ENCODE measurements at regions of chr17 and their contacts with region 1.

Region 1: DNA sequence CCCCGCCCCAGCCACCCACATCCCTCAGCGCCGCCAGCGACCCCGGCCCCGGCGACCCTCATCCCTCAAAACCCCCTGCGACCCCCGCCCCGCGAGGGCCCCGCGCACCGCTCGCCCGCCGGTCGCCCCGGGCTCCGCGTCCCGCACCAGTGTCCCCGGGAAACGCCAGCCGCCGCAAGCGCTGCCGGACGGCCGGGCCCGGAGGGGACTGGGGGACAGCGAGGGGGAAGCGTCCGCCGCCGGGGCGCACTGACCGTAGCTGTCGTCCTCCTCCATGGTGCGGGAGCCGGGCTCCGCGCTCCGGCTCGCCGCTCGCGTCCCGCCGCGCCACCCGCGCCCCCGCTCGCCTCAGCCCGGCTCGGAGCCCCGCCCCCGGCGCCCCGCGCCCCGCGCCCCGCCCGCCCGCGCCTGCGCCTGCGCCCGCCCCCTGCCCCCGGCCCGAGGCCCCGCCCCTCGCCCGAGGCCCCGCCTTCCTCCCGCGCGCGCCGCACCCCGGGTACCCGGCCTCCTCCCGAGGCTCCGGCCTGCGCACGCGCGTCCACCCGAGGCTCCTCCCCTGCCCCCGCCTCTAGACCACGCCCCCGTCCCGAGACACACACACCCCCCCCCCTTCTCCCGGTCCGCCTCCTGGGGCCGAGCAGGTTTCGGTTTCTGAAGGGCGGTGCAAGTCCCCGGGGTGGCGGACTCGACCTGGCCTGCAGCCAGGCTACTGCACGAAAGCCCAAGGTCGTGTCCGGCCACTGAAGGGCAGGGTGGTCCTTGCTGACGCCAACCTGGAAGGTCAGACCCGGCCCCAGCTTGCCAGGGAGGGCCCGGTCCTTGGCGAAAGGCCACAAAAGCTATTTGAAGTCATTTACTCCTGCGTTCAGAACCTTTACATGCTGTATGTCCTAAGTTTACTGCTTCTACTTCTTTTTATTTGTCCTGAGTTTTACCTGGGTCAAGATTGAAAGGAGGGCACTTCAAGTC is at the start of gene CYTH1:
- DNase-seq: peak; percentile 98
- H3K4me3 Mint-ChIP-seq: peak within 1 kb of the TSS; percentile 85
- H3K27ac Mint-ChIP-seq: peak within 1 kb of the TSS; percentile 98
- H3K4me1 Mint-ChIP-seq: peaks cover 56% of the 10 kb centered on the region
- H3K27me3 Mint-ChIP-seq: no peaks in the 10 kb centered on the region
- total RNA-seq, gene CYTH1: 288 to 309 TPM

Region 2: GRCh38 chr17:78769196-78769773 is 12.9 kb before region 1 on chr17:
- CTCF ChIA-PET with region 1: interaction called, 10 read pairs
- POLR2A ChIA-PET with region 1: interaction called, 861 read pairs
- DNase-seq: no peak
- H3K4me3 Mint-ChIP-seq: no peak overlapping the region
- H3K27ac Mint-ChIP-seq: no peak overlapping the region
- H3K4me1 Mint-ChIP-seq: peaks cover 48% of the 10 kb centered on the region
- H3K27me3 Mint-ChIP-seq: no peaks in the 10 kb centered on the region

Region 3: DNA sequence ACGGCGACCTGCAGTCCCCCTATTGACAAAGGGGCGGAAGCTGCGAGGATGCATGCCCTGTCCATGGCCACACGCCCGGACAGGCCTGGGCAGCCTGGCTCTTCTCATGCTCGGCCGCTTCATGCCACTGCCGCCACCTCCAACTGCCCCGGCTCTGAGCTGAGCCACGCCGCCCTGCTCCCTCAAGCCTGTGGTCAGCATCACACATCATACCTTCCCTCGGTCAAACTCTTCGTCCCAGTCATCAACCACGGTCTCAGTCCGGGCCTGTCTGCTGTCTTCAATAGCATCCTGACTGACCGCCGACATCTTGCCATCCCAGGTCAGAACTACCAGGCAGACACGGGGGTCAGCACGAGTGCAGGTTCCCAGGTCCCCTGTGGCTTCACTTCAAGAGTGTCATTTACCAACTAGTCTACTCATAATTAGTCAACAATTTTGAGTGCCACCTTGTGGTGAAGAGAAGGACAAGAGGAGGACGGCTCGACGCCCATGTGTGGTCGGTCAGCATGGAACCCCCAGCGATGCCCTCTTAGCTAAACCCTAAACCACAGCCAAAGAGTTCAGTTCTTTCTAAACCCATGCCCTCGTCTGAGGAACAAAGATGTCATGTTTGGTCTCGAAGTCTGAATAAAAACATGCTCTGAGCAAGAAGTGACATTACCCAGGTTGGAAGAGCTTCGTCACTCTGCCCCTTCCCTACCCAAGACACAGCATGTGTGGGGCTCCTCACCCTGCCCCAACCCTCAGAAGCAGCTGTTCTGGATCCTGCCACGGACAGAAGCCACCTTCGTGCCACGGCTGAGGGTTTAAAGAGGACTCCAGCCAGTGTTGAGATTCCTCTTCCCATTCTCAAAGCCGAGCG is 16.7 kb after region 1 on chr17:
- CTCF ChIA-PET with region 1: interaction called, 6 read pairs
- POLR2A ChIA-PET with region 1: interaction called, 16 read pairs
- DNase-seq: no peak
- H3K4me3 Mint-ChIP-seq: peak overlapping the region; percentile 37
- H3K27ac Mint-ChIP-seq: peak overlapping the region; percentile 86
- H3K4me1 Mint-ChIP-seq: peaks cover 77% of the 10 kb centered on the region
- H3K27me3 Mint-ChIP-seq: no peaks in the 10 kb centered on the region

Region 4: DNA sequence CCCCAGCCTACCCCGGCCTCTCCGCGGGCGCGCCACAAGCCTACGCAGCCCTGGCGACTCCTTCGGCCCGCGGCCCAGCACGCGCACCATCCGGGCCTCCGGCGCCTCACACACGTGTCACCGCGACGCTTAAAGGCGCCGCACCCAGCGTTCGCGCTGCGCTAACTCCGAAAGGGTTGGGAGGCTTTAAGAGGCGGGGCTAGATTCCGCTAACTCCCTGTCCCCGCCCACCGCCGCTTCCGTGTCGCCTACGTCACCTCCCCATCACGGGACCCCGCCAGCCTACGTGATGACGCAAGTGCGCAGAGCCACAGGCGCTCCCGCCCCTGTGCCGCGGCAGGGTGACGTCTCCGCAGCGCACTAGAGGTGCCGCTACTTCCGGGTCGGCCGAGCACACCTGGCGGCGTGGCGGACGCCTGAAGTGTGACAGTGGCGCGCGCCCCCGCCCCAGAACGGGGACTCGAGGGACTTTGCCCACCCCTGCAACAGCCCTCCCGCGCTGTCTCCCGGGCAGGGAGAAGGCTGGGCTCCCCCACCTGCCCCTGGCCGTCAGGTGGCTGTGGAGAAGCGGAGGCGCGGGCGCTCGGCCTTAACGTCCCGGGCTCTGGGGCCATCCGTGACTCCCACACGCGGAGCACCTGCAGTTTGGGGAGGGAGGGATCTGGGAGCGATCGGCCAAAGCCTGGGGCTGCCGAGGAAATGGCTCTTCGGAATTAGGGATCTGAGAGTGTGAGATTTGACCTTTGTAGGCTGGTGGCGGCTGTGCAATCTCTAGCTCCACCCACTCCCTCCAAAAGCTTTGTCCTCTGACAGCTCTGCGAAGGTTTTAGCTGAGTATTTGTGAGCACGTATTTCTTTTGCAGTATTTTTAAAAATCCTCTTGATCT is 58.7 kb after region 1 on chr17 and contains the start of gene USP36:
- CTCF ChIA-PET with region 1: no interaction called
- POLR2A ChIA-PET with region 1: interaction called, 16 read pairs
- DNase-seq: peak; percentile 100
- H3K4me3 Mint-ChIP-seq: peak within 1 kb of the TSS; percentile 94
- H3K27ac Mint-ChIP-seq: peak within 1 kb of the TSS; percentile 94
- H3K4me1 Mint-ChIP-seq: peaks cover 55% of the 10 kb centered on the region
- H3K27me3 Mint-ChIP-seq: no peaks in the 10 kb centered on the region
- total RNA-seq, gene USP36: 95.4 to 96.8 TPM